ENCODE measurements at regions of chr17 and their contacts with region 1.

Region 1: GRCh38 chr17:51371732-51372151 is 111.4 kb downstream of the UTP18 start:
- DNase-seq: peak; percentile 80
- H3K4me3 ChIP-seq: no peak overlapping the region
- H3K27ac ChIP-seq: no peak overlapping the region
- H3K4me1 ChIP-seq: no peaks in the 10 kb centered on the region
- H3K27me3 ChIP-seq: no peaks in the 10 kb centered on the region
- CTCF ChIP-seq: peak; percentile 73

Region 2: GRCh38 chr17:51028176-51028863 is 343.4 kb before region 1 on chr17:
- CTCF ChIA-PET with region 1: no interaction called
- POLR2A ChIA-PET with region 1: interaction called, 22 read pairs
- intact Hi-C with region 1: no loop called
- DNase-seq: no peak
- H3K4me3 ChIP-seq: no peak overlapping the region
- H3K27ac ChIP-seq: no peak overlapping the region
- H3K4me1 ChIP-seq: peaks cover 5% of the 10 kb centered on the region
- H3K27me3 ChIP-seq: no peaks in the 10 kb centered on the region
- CTCF ChIP-seq: no peak

Region 3: GRCh38 chr17:51540151-51540550 is 168.4 kb after region 1 on chr17:
- CTCF ChIA-PET with region 1: interaction called, 9 read pairs
- POLR2A ChIA-PET with region 1: no interaction called
- intact Hi-C with region 1: loop called (anchors 1 kb)
- DNase-seq: peak; percentile 9
- H3K4me3 ChIP-seq: no peak overlapping the region
- H3K27ac ChIP-seq: no peak overlapping the region
- H3K4me1 ChIP-seq: no peaks in the 10 kb centered on the region
- H3K27me3 ChIP-seq: peaks cover 13% of the 10 kb centered on the region
- CTCF ChIP-seq: 0 out of 2 replicates have a peak, but pooled peaks have one; percentile 27

Region 4: GRCh38 chr17:51640108-51640622 is 268.4 kb after region 1 on chr17:
- CTCF ChIA-PET with region 1: interaction called, 4 read pairs
- POLR2A ChIA-PET with region 1: no interaction called
- intact Hi-C with region 1: loop called (anchors 5 kb)
- DNase-seq: peak; percentile 33
- H3K4me3 ChIP-seq: no peak overlapping the region
- H3K27ac ChIP-seq: no peak overlapping the region
- H3K4me1 ChIP-seq: no peaks in the 10 kb centered on the region
- H3K27me3 ChIP-seq: peaks cover 49% of the 10 kb centered on the region
- CTCF ChIP-seq: peak; percentile 62

Region 5: GRCh38 chr17:52106638-52107261 is 735.0 kb after region 1 on chr17:
- CTCF ChIA-PET with region 1: interaction called, 4 read pairs
- POLR2A ChIA-PET with region 1: no interaction called
- intact Hi-C with region 1: loop called (anchors 5 kb)
- DNase-seq: peak; percentile 59
- H3K4me3 ChIP-seq: no peak overlapping the region
- H3K27ac ChIP-seq: no peak overlapping the region
- H3K4me1 ChIP-seq: no peaks in the 10 kb centered on the region
- H3K27me3 ChIP-seq: no peaks in the 10 kb centered on the region
- CTCF ChIP-seq: peak; percentile 86

Region 6: GRCh38 chr17:52120465-52120864 is 748.7 kb after region 1 on chr17:
- CTCF ChIA-PET with region 1: no interaction called
- POLR2A ChIA-PET with region 1: no interaction called
- intact Hi-C with region 1: no loop called
- DNase-seq: no peak
- H3K4me3 ChIP-seq: no peak overlapping the region
- H3K27ac ChIP-seq: no peak overlapping the region
- H3K4me1 ChIP-seq: no peaks in the 10 kb centered on the region
- H3K27me3 ChIP-seq: no peaks in the 10 kb centered on the region
- CTCF ChIP-seq: no peak

Region 7: GRCh38 chr17:52227926-52228325 is 856.2 kb after region 1 on chr17:
- CTCF ChIA-PET with region 1: no interaction called
- POLR2A ChIA-PET with region 1: no interaction called
- intact Hi-C with region 1: no loop called
- DNase-seq: no peak
- H3K4me3 ChIP-seq: no peak overlapping the region
- H3K27ac ChIP-seq: no peak overlapping the region
- H3K4me1 ChIP-seq: no peaks in the 10 kb centered on the region
- H3K27me3 ChIP-seq: no peaks in the 10 kb centered on the region
- CTCF ChIP-seq: no peak

Measured in A673 (cell line).